Tibial artery (tissue), 4 donors: ENCODE measurements at regions of chr7 and their contacts with region 1.

Region 1: DNA sequence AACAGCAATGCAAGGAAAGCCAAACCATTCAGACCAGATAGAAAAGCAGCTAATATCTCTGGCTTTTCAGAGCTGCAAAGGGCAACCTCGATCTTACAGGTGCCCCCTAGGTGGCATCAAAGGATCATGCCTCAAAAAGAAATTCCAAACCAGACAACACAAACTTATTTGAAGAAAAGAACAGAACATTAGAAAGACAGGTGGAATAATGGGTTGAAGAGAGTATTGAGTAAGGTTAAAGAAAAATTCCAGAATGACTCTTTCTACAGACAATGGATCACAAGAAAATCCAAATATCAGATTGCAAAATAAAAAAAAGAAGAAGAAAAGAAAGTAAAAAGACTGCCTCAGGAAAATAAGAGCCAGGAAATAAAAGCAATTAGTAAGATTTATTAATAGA is 213.7 kb downstream of the ELMO1 start:
- DNase-seq: no peak
- H3K4me3 ChIP-seq: no peak overlapping the region
- H3K27ac ChIP-seq: no peak overlapping the region
- H3K4me1 ChIP-seq: peaks cover 0 to 6% (median 4%) of the 10 kb centered on the region in 4 donors
- H3K27me3 ChIP-seq: no peaks in the 10 kb centered on the region
- CTCF ChIP-seq: peak; percentile 37 to 51

Region 2: GRCh38 chr7:36904802-36905201 is 330.1 kb before region 1 on chr7:
- intact Hi-C with region 1: no loop called
- DNase-seq: no peak
- H3K4me3 ChIP-seq: no peak overlapping the region
- H3K27ac ChIP-seq: no peak overlapping the region
- H3K4me1 ChIP-seq: no peaks in the 10 kb centered on the region
- H3K27me3 ChIP-seq: no peaks in the 10 kb centered on the region
- CTCF ChIP-seq: no peak

Region 3: GRCh38 chr7:37480041-37481031 is 245.4 kb after region 1 on chr7:
- intact Hi-C with region 1: loop called (anchors 10 kb)
- DNase-seq: peak in 1 of 2 donors; percentile 26
- H3K4me3 ChIP-seq: no peak overlapping the region
- H3K27ac ChIP-seq: no peak overlapping the region
- H3K4me1 ChIP-seq: no peaks in the 10 kb centered on the region
- H3K27me3 ChIP-seq: no peaks in the 10 kb centered on the region
- CTCF ChIP-seq: no peak